ENCODE measurements at regions of chr16 and their contacts with region 1.

Region 1: GRCh38 chr16:57462209-57462977 is at the start of gene POLR2C:
- DNase-seq: peak; percentile 94 to 96
- ATAC-seq: peak; percentile 97 to 98 (median 98)
- H3K4me3 ChIP-seq: peak within 1 kb of the TSS; percentile 51
- H3K4me3 Mint-ChIP-seq: peak within 1 kb of the TSS; percentile 100
- H3K27ac ChIP-seq: peak within 1 kb of the TSS; percentile 58
- H3K27ac Mint-ChIP-seq: peak within 1 kb of the TSS; percentile 90 to 94
- H3K4me1 ChIP-seq: peaks cover 12% of the 10 kb centered on the region
- H3K4me1 Mint-ChIP-seq: peaks cover 32 to 33% of the 10 kb centered on the region in 2 donors
- H3K27me3 ChIP-seq: no peaks in the 10 kb centered on the region
- H3K27me3 Mint-ChIP-seq: no peaks in the 10 kb centered on the region
- CTCF ChIP-seq: peak; percentile 94
- total RNA-seq, gene POLR2C: 55.4 to 71.2 (median 66.7) TPM

Region 2: DNA sequence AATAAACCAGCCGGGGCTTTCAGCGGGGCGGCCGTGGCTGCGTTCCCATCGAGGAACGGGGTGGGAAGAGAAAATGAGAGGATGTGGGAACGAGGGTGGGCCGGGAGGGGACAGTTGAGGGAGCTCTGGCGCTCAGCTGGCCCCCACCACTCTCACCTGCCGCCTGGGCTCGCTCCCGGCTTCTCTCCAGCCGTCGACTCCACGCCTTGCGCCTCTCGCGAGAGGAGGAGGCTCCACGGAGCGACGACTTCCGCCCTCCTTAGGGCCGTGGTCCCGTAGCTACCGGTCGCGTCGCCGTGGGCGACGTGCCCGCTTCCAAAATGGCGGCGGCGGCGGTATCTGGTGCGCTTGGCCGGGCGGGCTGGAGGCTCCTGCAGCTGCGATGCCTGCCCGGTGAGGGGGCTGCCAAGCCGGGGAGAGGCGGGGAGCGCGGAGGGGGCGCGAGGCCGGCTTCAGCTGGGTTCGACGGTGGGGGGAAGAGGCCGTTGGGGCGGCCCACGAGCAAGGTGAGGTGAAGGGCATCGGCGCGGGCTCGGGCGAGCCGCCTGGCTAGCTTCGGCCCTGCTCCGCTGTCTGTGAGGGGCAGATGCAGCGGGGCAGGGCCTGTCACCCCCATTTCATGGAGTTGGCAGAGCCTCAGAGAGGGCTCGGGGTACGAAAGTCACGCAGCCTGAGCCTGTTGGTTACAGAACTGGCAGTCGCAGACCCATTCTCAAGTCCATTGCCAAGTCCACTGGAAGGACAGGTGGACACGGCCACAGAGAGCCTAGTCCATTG is 15.0 kb before region 1 on chr16 and contains the starts of genes CIAPIN1 and COQ9:
- intact Hi-C with region 1: loop called (anchors 1 kb)
- DNase-seq: peak; percentile 87 to 97
- ATAC-seq: peak; percentile 98 to 99 (median 99)
- H3K4me3 ChIP-seq: peak within 1 kb of the TSS; percentile 90
- H3K4me3 Mint-ChIP-seq: peak within 1 kb of the TSS; percentile 90
- H3K27ac ChIP-seq: peak within 1 kb of the TSS; percentile 75
- H3K27ac Mint-ChIP-seq: peak within 1 kb of the TSS; percentile 77 to 89
- H3K4me1 ChIP-seq: peaks cover 20% of the 10 kb centered on the region
- H3K4me1 Mint-ChIP-seq: peaks cover 10 to 20% of the 10 kb centered on the region in 2 donors
- H3K27me3 ChIP-seq: no peaks in the 10 kb centered on the region
- H3K27me3 Mint-ChIP-seq: no peaks in the 10 kb centered on the region
- CTCF ChIP-seq: no peak
- total RNA-seq, gene CIAPIN1: 41.1 to 48.8 (median 42.9) TPM
- total RNA-seq, gene COQ9: 16.9 to 30.2 (median 18.3) TPM

Measured in natural killer cell (primary cell).